CD4-positive, alpha-beta T cell (primary cell): ENCODE measurements at regions of chr11 and their contacts with region 1.

Region 1: DNA sequence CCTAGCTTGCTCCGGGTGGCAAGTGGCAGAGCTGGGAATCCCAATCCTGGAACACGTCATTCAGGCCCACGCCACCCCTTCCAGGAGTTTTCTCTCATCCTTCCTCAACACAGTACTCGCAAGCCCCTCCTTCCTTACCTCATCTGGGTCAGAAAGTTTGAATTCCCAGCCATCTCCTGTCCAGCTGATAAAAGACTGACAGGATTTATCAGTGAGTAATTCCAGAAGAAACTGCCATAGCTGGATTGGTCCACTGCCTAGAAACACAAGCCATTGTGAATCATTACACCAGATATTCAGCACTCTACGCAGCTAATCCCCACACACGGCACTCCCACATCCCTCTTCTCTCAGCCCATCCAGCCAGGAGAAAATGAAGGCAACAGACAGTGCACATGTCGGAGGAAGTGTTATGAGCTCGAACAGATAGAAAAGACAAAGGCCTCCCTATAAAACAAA is 124.0 kb downstream of the ETS1 start:
- DNase-seq: peak in 2 of 14 experiments; percentile 3 to 17
- ATAC-seq: no peak
- H3K4me3 ChIP-seq: no peak overlapping the region
- H3K4me3 Mint-ChIP-seq: peak overlapping the region; percentile 82
- H3K27ac ChIP-seq: peak overlapping the region; percentile 92 to 94
- H3K27ac Mint-ChIP-seq: peak overlapping the region; percentile 99
- H3K4me1 ChIP-seq: peaks cover 73% of the 10 kb centered on the region
- H3K4me1 Mint-ChIP-seq: peaks cover 96% of the 10 kb centered on the region
- H3K27me3 ChIP-seq: no peaks in the 10 kb centered on the region
- H3K27me3 Mint-ChIP-seq: no peaks in the 10 kb centered on the region
- CTCF ChIP-seq: no peak

Region 2: GRCh38 chr11:128422576-128423370 is 40.6 kb before region 1 on chr11:
- CTCF ChIA-PET with region 1: no interaction called
- POLR2A ChIA-PET with region 1: interaction called, 5 read pairs
- intact Hi-C with region 1: loop called in 1 of 2 experiments (anchors 1 kb)
- DNase-seq: peak; percentile 64 to 96 (median 82)
- ATAC-seq: peak; percentile 92
- H3K4me3 ChIP-seq: peak overlapping the region; percentile 13
- H3K4me3 Mint-ChIP-seq: peak overlapping the region; percentile 74
- H3K27ac ChIP-seq: peak overlapping the region in 1 of 2 donors; percentile 24
- H3K27ac Mint-ChIP-seq: peak overlapping the region; percentile 96
- H3K4me1 ChIP-seq: peaks cover 37% of the 10 kb centered on the region
- H3K4me1 Mint-ChIP-seq: peaks cover 75% of the 10 kb centered on the region
- H3K27me3 ChIP-seq: no peaks in the 10 kb centered on the region
- H3K27me3 Mint-ChIP-seq: no peaks in the 10 kb centered on the region
- CTCF ChIP-seq: no peak

Region 3: GRCh38 chr11:128482512-128483191 is 19.3 kb after region 1 on chr11:
- CTCF ChIA-PET with region 1: interaction called, 3 read pairs
- POLR2A ChIA-PET with region 1: interaction called, 476 read pairs
- intact Hi-C with region 1: loop called in 1 of 2 experiments (anchors 2 kb)
- DNase-seq: peak in 6 of 14 experiments; percentile 51 to 87 (median 70)
- ATAC-seq: peak; percentile 58
- H3K4me3 ChIP-seq: peak overlapping the region; percentile 46
- H3K4me3 Mint-ChIP-seq: peak overlapping the region; percentile 76
- H3K27ac ChIP-seq: peak overlapping the region; percentile 92 to 94
- H3K27ac Mint-ChIP-seq: peak overlapping the region; percentile 99
- H3K4me1 ChIP-seq: peaks cover 95% of the 10 kb centered on the region
- H3K4me1 Mint-ChIP-seq: peaks cover 99% of the 10 kb centered on the region
- H3K27me3 ChIP-seq: no peaks in the 10 kb centered on the region
- H3K27me3 Mint-ChIP-seq: no peaks in the 10 kb centered on the region
- CTCF ChIP-seq: no peak

Region 4: DNA sequence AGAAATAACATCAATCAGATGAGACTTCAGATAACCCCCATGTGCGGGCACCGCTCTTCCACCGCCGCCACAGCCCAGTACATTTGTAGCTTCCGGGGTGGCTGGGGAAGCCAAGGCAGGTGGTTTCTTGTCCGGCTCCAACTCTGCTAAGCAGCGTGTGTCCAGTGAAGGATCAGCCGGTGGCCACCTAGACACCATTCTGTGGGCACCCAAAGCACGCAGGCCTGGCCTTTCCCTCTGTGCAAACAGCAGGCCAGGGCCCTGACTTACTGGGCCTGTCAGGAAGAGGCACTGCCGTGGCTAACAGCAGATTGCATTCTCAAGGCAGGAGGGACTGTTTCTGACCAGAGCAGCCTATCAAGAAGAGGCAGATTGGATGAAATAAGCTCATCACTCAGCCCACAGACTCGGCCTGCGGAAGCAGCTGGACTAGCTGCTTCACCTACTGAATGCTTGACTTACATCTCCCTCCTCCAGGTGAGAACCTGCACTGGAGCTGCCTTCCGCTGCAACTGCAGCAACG is 49.1 kb after region 1 on chr11:
- CTCF ChIA-PET with region 1: interaction called, 3 read pairs
- POLR2A ChIA-PET with region 1: interaction called, 449 read pairs
- intact Hi-C with region 1: loop called in 1 of 2 experiments (anchors 2 kb)
- DNase-seq: peak in 5 of 14 experiments; percentile 42 to 61 (median 59)
- ATAC-seq: peak; percentile 7
- H3K4me3 ChIP-seq: peak overlapping the region; percentile 89
- H3K4me3 Mint-ChIP-seq: peak overlapping the region; percentile 93
- H3K27ac ChIP-seq: peak overlapping the region; percentile 43 to 93
- H3K27ac Mint-ChIP-seq: peak overlapping the region; percentile 99
- H3K4me1 ChIP-seq: peaks cover 55% of the 10 kb centered on the region
- H3K4me1 Mint-ChIP-seq: peaks cover 92% of the 10 kb centered on the region
- H3K27me3 ChIP-seq: no peaks in the 10 kb centered on the region
- H3K27me3 Mint-ChIP-seq: no peaks in the 10 kb centered on the region
- CTCF ChIP-seq: no peak

Region 5: DNA sequence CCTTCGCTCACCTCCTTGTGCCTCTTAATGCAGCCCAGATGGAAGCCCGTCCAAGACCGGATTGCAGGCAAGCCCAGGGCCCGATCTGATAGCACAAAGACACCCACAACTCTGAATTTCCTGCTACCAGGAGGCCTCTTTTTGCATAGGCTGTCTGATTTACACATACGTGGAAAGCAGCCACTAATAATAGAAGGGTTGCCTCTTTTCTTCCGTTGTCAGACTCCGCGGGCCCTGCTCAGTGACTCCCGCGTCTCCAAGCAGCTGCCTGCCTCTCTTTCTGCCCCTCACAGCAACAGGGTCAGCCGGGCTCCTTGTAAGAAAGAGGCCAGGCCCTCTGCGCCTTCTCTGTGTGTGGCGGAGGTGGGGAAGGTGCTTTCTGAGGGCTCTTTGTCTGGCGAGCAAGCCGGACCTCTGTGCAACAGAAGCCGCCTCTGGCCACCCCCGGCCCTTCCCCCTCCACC is 257.2 kb after region 1 on chr11:
- CTCF ChIA-PET with region 1: no interaction called
- POLR2A ChIA-PET with region 1: no interaction called
- intact Hi-C with region 1: no loop called
- DNase-seq: peak in 9 of 14 experiments; percentile 20 to 74 (median 33)
- ATAC-seq: peak; percentile 46
- H3K4me3 ChIP-seq: peak overlapping the region; percentile 37
- H3K4me3 Mint-ChIP-seq: peak overlapping the region; percentile 87
- H3K27ac ChIP-seq: peak overlapping the region; percentile 65 to 84
- H3K27ac Mint-ChIP-seq: peak overlapping the region; percentile 90
- H3K4me1 ChIP-seq: peaks cover 98% of the 10 kb centered on the region
- H3K4me1 Mint-ChIP-seq: peaks cover 99% of the 10 kb centered on the region
- H3K27me3 ChIP-seq: no peaks in the 10 kb centered on the region
- H3K27me3 Mint-ChIP-seq: peaks cover 3% of the 10 kb centered on the region
- CTCF ChIP-seq: no peak